ENCODE measurements at regions of chr21 and their contacts with region 1.

Region 1: GRCh38 chr21:38805328-38806152 is at the start of gene ETS2:
- DNase-seq: peak; percentile 89
- ATAC-seq: peak; percentile 74
- H3K4me3 Mint-ChIP-seq: peak within 1 kb of the TSS; percentile 86
- H3K27ac Mint-ChIP-seq: peak within 1 kb of the TSS; percentile 96
- H3K4me1 Mint-ChIP-seq: peaks cover 49% of the 10 kb centered on the region
- H3K27me3 Mint-ChIP-seq: no peaks in the 10 kb centered on the region
- total RNA-seq, gene ETS2: 44.7 to 61.9 TPM

Region 2: DNA sequence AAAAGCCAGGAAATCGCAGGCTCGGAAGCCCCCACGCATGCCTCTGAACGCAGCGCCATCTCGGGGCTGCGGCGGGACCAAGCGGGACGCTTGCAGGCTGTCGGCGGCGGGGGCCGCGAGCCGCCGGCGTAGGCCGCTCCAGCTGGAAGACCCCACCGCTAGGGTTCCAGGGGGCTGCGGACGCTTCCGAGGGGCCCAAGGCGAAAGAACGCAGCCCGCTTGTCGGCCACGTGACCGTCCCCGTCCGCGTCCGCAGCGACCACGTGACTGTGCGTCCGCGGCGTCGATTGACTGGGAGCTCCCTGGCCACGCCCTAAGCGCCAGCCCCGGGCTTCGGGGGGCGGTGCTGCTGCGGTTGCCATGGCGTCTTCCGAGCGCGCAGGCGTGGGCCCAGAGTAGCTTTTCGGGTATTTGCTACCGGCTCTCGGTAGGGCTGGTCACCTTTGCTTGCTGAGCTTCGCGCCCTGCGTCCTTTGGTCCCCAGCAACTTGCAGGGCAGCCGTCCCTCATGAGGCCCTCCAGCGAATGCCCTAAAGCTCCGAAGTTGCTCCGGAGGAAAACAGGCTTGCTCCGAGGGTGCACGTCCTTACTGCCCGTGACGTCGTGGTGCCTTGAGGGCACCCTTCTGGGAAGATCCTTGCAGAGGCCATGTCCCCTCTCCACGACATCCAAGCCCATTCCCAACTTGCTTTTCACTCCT is 1241.7 kb before region 1 on chr21:
- CTCF ChIA-PET with region 1: no interaction called
- POLR2A ChIA-PET with region 1: no interaction called
- intact Hi-C with region 1: loop called (anchors 2 to 10 kb)
- DNase-seq: peak; percentile 96
- ATAC-seq: peak; percentile 79
- H3K4me3 Mint-ChIP-seq: peak overlapping the region; percentile 88
- H3K27ac Mint-ChIP-seq: peak overlapping the region; percentile 100
- H3K4me1 Mint-ChIP-seq: peaks cover 23% of the 10 kb centered on the region
- H3K27me3 Mint-ChIP-seq: no peaks in the 10 kb centered on the region

Region 3: GRCh38 chr21:38258521-38259485 is 546.7 kb before region 1 on chr21:
- CTCF ChIA-PET with region 1: no interaction called
- POLR2A ChIA-PET with region 1: no interaction called
- intact Hi-C with region 1: no loop called
- DNase-seq: no peak
- ATAC-seq: no peak
- H3K4me3 Mint-ChIP-seq: no peak overlapping the region
- H3K27ac Mint-ChIP-seq: no peak overlapping the region
- H3K4me1 Mint-ChIP-seq: no peaks in the 10 kb centered on the region
- H3K27me3 Mint-ChIP-seq: peaks cover 18% of the 10 kb centered on the region

Region 4: DNA sequence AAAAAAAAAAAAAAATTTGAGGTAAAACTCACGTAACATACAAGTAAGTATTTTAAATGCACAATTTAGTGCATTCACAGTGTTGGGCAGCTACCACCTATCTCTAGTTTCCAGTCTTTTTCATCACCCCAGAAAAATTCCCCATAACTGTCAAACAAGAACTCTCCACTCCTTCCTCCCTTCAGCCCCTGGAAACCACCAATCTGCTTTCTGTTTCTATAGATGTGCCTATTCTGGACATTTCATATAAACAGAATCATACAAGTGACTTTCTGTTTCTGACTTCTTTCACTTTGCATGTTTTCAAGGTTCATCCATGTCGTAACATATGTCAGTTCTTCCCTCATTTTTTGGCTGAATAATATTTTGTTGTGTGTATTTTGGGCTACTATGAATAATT is 24.7 kb before region 1 on chr21:
- CTCF ChIA-PET with region 1: interaction called, 3 read pairs
- POLR2A ChIA-PET with region 1: no interaction called
- intact Hi-C with region 1: loop called (anchors 2 kb)
- DNase-seq: peak; percentile 32
- ATAC-seq: peak; percentile 83
- H3K4me3 Mint-ChIP-seq: no peak overlapping the region
- H3K27ac Mint-ChIP-seq: peak overlapping the region; percentile 23
- H3K4me1 Mint-ChIP-seq: peaks cover 37% of the 10 kb centered on the region
- H3K27me3 Mint-ChIP-seq: peaks cover 11% of the 10 kb centered on the region

Region 5: DNA sequence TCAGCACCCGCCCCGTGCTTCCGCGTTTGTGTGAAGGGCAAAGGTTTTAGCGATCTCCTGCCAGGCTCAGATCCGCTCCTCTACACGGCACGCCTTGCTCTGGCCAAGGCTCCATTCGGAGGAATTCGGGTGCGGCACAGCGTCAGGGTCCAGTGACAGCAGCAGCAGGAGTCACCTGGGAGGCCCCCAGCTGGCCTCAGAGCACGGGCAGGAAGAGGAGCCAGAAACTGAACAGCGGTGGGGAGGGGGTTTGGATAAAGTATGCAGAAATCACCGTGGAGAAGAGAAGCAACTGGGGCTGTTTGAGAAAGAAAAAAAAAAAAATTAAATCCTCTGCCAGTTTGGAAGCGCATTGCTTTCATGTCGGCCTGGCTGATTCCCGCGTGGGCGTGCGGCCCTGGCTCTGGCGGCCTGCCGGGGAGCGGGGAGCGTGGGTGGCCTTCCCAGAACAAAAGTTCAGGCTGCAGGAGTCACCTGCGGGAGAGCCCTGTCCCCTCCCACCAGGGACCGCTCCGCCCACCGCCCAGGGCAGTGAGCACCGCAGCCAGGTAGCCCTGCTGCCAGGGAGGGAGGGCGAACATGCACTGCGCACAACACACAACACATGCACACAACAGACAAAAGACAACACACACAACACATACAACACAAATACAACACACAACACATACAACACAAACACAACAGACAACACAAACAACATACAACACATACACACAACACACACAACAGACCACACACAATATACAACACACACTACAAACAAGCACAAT is 107.8 kb after region 1 on chr21:
- CTCF ChIA-PET with region 1: no interaction called
- POLR2A ChIA-PET with region 1: no interaction called
- intact Hi-C with region 1: loop called in 1 of 2 experiments (anchors 2 kb)
- DNase-seq: peak; percentile 61
- ATAC-seq: no peak
- H3K4me3 Mint-ChIP-seq: no peak overlapping the region
- H3K27ac Mint-ChIP-seq: no peak overlapping the region
- H3K4me1 Mint-ChIP-seq: peaks cover 18% of the 10 kb centered on the region
- H3K27me3 Mint-ChIP-seq: peaks cover 15% of the 10 kb centered on the region

Region 6: DNA sequence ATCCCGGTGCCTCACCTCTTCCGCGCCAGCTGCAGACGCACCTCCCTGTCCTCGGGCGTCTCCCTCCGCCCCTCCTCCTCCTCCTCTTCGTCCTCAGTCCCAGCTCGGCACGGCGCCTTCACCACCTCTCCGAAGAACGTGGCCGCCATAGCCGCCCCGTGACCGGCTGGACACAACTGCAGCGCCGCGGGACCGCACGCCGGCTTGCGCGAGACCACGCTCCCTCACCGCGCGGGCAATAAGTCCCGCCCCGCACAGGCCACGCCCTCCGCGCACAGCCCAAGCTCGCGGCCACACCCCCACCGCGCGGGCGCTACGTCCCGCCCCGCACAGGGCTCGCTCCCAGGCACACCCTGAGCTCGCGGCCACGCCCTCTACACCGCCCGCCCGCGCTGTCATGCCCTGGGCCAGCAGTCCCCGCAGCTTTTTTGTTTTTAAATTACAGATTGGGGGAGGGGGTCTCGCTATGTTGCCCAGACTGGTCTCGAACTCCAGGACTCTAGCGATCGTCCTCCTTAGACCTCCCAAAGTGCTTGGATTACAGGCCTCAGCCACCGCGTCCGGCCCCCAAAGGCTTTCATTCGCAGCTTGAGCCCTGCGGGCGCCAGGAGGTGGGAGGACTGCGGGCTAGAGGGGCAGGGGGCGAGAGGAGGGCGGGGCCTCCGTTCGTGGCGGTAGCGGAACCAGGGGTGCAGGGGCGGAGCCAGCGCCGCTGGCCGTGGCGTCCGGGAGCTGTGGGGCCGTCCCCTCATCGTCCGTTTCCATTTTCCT is 377.9 kb after region 1 on chr21 and contains the start of gene PSMG1:
- CTCF ChIA-PET with region 1: interaction called, 3 read pairs
- POLR2A ChIA-PET with region 1: interaction called, 3 read pairs
- intact Hi-C with region 1: loop called in 1 of 2 experiments (anchors 1 kb)
- DNase-seq: peak; percentile 97
- ATAC-seq: peak; percentile 92
- H3K4me3 Mint-ChIP-seq: peak within 1 kb of the TSS; percentile 95
- H3K27ac Mint-ChIP-seq: peak within 1 kb of the TSS; percentile 97
- H3K4me1 Mint-ChIP-seq: peaks cover 63% of the 10 kb centered on the region
- H3K27me3 Mint-ChIP-seq: no peaks in the 10 kb centered on the region
- total RNA-seq, gene PSMG1: 109 to 123 TPM

Region 7: GRCh38 chr21:39349211-39350093 is 543.9 kb after region 1 on chr21:
- CTCF ChIA-PET with region 1: no interaction called
- POLR2A ChIA-PET with region 1: no interaction called
- intact Hi-C with region 1: loop called in 1 of 2 experiments (anchors 1 kb)
- DNase-seq: peak; percentile 99
- ATAC-seq: peak; percentile 89
- H3K4me3 Mint-ChIP-seq: peak overlapping the region; percentile 92
- H3K27ac Mint-ChIP-seq: peak overlapping the region; percentile 100
- H3K4me1 Mint-ChIP-seq: peaks cover 33% of the 10 kb centered on the region
- H3K27me3 Mint-ChIP-seq: no peaks in the 10 kb centered on the region

Region 8: GRCh38 chr21:39445321-39446269 is 640.1 kb after region 1 on chr21 and contains the start of gene LCA5L:
- CTCF ChIA-PET with region 1: no interaction called
- POLR2A ChIA-PET with region 1: no interaction called
- intact Hi-C with region 1: loop called in 1 of 2 experiments (anchors 1 kb)
- DNase-seq: peak; percentile 94
- ATAC-seq: peak; percentile 95
- H3K4me3 Mint-ChIP-seq: peak within 1 kb of the TSS; percentile 84
- H3K27ac Mint-ChIP-seq: peak within 1 kb of the TSS; percentile 93
- H3K4me1 Mint-ChIP-seq: peaks cover 16% of the 10 kb centered on the region
- H3K27me3 Mint-ChIP-seq: peaks cover 6% of the 10 kb centered on the region
- total RNA-seq, gene LCA5L: 0.25 to 0.32 TPM

Measured in activated CD4-positive, alpha-beta T cell treated with anti-CD3 and anti-CD28 coated beads for 36 hours (primary cell).